Right cardiac atrium (tissue), 5 donors: ENCODE measurements at regions of chr1 and their contacts with region 1.

Region 1: GRCh38 chr1:207963427-207964194 is 52.7 kb upstream of the CD34 start:
- DNase-seq: peak; percentile 92 to 98 (median 98)
- ATAC-seq: peak; percentile 76 to 82
- H3K4me3 ChIP-seq: peak overlapping the region; percentile 51
- H3K27ac ChIP-seq: peak overlapping the region; percentile 98
- H3K4me1 ChIP-seq: peaks cover 11% of the 10 kb centered on the region
- H3K27me3 ChIP-seq: no peaks in the 10 kb centered on the region

Region 2: GRCh38 chr1:207828485-207829158 is 135.0 kb before region 1 on chr1:
- intact Hi-C with region 1: loop called in 3 of 4 experiments (anchors 5 to 10 kb)
- DNase-seq: peak; percentile 75 to 90 (median 88)
- ATAC-seq: peak; percentile 60 to 65
- H3K4me3 ChIP-seq: no peak overlapping the region
- H3K27ac ChIP-seq: peak overlapping the region; percentile 71
- H3K4me1 ChIP-seq: peaks cover 46% of the 10 kb centered on the region
- H3K27me3 ChIP-seq: no peaks in the 10 kb centered on the region

Region 3: GRCh38 chr1:207885129-207886032 is 78.2 kb before region 1 on chr1:
- intact Hi-C with region 1: loop called in 2 of 4 experiments (anchors 5 kb)
- DNase-seq: peak; percentile 88 to 95 (median 92)
- ATAC-seq: peak; percentile 89 to 91
- H3K4me3 ChIP-seq: no peak overlapping the region
- H3K27ac ChIP-seq: peak overlapping the region; percentile 66
- H3K4me1 ChIP-seq: peaks cover 18% of the 10 kb centered on the region
- H3K27me3 ChIP-seq: no peaks in the 10 kb centered on the region

Region 4: GRCh38 chr1:207897188-207897587 is 66.4 kb before region 1 on chr1:
- intact Hi-C with region 1: loop called in 2 of 4 experiments (anchors 2 to 5 kb)
- DNase-seq: no peak
- ATAC-seq: no peak
- H3K4me3 ChIP-seq: no peak overlapping the region
- H3K27ac ChIP-seq: no peak overlapping the region
- H3K4me1 ChIP-seq: peaks cover 7% of the 10 kb centered on the region
- H3K27me3 ChIP-seq: no peaks in the 10 kb centered on the region

Region 5: GRCh38 chr1:207910591-207911354 is 52.8 kb before region 1 on chr1 and contains the start of gene CD34:
- intact Hi-C with region 1: loop called in 2 of 4 experiments (anchors 5 kb)
- DNase-seq: peak; percentile 84 to 94 (median 92)
- ATAC-seq: peak; percentile 68 to 73
- H3K4me3 ChIP-seq: peak within 1 kb of the TSS; percentile 85
- H3K27ac ChIP-seq: peak within 1 kb of the TSS; percentile 96
- H3K4me1 ChIP-seq: peaks cover 7% of the 10 kb centered on the region
- H3K27me3 ChIP-seq: no peaks in the 10 kb centered on the region
- total RNA-seq, gene CD34: 81.8 to 170 (median 123) TPM

Region 6: DNA sequence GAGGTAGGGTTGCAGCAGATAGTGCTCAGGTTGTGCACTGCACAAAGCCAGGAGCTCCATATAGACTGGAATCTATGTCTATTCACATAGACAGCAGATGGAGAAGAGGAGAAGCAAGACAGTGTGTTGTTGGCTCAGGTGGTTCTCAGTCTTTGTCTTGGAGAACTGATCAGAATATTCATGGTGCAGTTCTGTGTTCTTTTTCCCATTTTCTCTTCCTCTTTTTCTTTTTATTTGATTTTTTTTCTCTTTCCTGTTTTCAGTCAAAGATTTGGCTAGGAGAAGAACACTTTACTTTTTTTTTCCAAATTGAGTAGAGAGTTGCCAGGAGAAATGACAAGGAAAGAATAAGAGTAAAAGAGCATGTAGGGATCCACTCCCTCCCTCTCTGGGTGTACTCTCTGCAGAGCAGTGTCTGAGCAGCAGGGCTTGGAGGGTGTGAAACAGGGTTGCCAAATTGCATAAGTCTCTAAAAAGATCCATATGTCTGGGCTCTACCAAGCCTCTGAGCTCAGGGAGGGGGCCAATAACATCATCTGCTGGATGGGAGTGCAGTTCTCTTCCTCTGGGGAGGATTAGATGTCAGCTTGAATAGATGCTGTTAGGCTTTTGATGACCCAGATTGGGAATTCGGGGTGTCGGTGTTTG is 44.0 kb before region 1 on chr1:
- intact Hi-C with region 1: loop called in 2 of 4 experiments (anchors 5 kb)
- DNase-seq: peak in 2 of 3 donors; percentile 36 to 72
- ATAC-seq: peak; percentile 53 to 76
- H3K4me3 ChIP-seq: no peak overlapping the region
- H3K27ac ChIP-seq: peak overlapping the region; percentile 65
- H3K4me1 ChIP-seq: peaks cover 37% of the 10 kb centered on the region
- H3K27me3 ChIP-seq: no peaks in the 10 kb centered on the region

Region 7: GRCh38 chr1:208101661-208102431 is 138.2 kb after region 1 on chr1:
- intact Hi-C with region 1: no loop called
- DNase-seq: peak; percentile 63 to 78 (median 74)
- ATAC-seq: peak; percentile 53 to 61
- H3K4me3 ChIP-seq: no peak overlapping the region
- H3K27ac ChIP-seq: no peak overlapping the region
- H3K4me1 ChIP-seq: peaks cover 8% of the 10 kb centered on the region
- H3K27me3 ChIP-seq: no peaks in the 10 kb centered on the region

Region 8: DNA sequence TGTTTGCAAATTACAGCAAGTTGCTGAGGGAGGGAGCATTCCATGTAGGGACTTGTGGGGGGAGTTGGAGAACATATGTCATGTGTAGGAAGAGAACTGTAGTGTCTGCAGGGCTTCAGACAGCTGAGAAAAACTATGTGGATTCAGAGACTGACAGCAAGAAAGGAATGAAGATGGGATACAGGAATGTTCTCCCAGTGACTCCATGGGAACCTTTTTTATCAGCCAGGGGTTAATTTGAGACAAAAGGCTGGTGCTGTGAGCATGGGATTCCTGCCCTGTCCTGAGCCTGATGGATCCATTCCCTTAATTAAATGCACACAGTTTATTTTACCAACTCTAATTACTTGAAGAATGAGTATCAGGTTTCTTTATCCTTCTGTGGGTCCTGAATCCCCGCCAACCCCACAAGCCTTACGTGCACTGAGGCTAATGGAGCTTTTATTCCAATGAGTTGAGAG is 307.1 kb after region 1 on chr1:
- intact Hi-C with region 1: no loop called
- DNase-seq: no peak
- ATAC-seq: no peak
- H3K4me3 ChIP-seq: no peak overlapping the region
- H3K27ac ChIP-seq: no peak overlapping the region
- H3K4me1 ChIP-seq: peaks cover 3% of the 10 kb centered on the region
- H3K27me3 ChIP-seq: no peaks in the 10 kb centered on the region